ENCODE measurements at regions of chr22 and their contacts with region 1.

Region 1: GRCh38 chr22:28402539-28402938 is 277.1 kb downstream of the TTC28 start:
- DNase-seq: no peak
- H3K4me3 ChIP-seq: no peak overlapping the region
- H3K27ac ChIP-seq: no peak overlapping the region
- H3K4me1 ChIP-seq: no peaks in the 10 kb centered on the region
- H3K27me3 ChIP-seq: no peaks in the 10 kb centered on the region
- CTCF ChIP-seq: no peak
- POLR2A ChIP-seq: no peak

Region 2: DNA sequence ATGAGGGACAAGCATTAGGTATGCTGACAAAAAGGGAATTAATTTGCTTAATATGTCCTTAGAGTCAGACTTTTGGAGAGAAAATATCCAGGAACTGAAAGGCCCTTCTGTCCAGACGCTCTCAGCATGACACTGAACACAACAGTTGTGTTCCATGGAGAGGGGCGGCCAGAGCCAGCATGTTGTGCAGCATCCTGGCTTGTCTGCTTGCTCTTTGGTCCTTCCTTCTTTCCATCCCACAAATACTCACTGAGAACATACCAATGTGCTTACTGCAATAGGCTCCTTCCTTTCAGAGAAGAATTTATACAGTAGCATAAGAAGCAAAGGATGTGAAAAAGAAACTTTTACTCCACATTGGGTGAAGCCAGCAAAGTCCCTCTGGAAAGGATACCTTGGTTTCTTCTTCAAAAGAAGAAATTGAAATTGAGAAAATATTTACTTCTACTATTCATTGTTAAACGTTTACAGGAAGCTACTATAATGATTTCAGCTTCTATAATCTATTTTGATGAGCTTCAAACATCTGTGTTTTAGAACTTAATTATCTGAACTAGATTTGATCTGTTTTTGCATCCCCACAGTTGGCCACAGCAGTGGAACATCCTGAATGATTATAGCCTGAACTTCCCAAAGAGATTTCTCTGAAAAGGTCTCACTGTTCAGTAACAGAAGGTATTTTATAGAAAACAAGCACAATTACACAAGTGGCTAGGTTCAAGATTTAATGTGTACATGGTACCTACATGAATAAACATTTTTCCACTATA is 179.4 kb before region 1 on chr22:
- intact Hi-C with region 1: loop called (anchors 5 kb)
- DNase-seq: peak in 1 of 2 donors; percentile 17
- H3K4me3 ChIP-seq: no peak overlapping the region
- H3K27ac ChIP-seq: no peak overlapping the region
- H3K4me1 ChIP-seq: no peaks in the 10 kb centered on the region
- H3K27me3 ChIP-seq: no peaks in the 10 kb centered on the region
- CTCF ChIP-seq: no peak
- POLR2A ChIP-seq: no peak